ENCODE measurements at regions of chr22 and their contacts with region 1.

Region 1: GRCh38 chr22:22877523-22878210 is 9.9 kb upstream of the IGLL5 start:
- DNase-seq: peak; percentile 62
- ATAC-seq: no peak; the same call in 1 of the 2 replicates
- H3K4me3 ChIP-seq: no peak overlapping the region
- H3K27ac ChIP-seq: no peak overlapping the region
- H3K4me1 ChIP-seq: no peaks in the 10 kb centered on the region
- H3K27me3 ChIP-seq: no peaks in the 10 kb centered on the region; the same call in 1 of the 2 replicates
- CTCF ChIP-seq: peak; percentile 62

Region 2: GRCh38 chr22:22787786-22788459 is 89.7 kb before region 1 on chr22:
- CTCF ChIA-PET with region 1: interaction called, 5 read pairs
- POLR2A ChIA-PET with region 1: no interaction called
- intact Hi-C with region 1: loop called (anchors 5 kb)
- DNase-seq: peak; percentile 60
- ATAC-seq: peak; percentile 49
- H3K4me3 ChIP-seq: no peak overlapping the region
- H3K27ac ChIP-seq: no peak overlapping the region
- H3K4me1 ChIP-seq: no peaks in the 10 kb centered on the region
- H3K27me3 ChIP-seq: peaks cover 30% of the 10 kb centered on the region
- CTCF ChIP-seq: peak; percentile 80

Region 3: DNA sequence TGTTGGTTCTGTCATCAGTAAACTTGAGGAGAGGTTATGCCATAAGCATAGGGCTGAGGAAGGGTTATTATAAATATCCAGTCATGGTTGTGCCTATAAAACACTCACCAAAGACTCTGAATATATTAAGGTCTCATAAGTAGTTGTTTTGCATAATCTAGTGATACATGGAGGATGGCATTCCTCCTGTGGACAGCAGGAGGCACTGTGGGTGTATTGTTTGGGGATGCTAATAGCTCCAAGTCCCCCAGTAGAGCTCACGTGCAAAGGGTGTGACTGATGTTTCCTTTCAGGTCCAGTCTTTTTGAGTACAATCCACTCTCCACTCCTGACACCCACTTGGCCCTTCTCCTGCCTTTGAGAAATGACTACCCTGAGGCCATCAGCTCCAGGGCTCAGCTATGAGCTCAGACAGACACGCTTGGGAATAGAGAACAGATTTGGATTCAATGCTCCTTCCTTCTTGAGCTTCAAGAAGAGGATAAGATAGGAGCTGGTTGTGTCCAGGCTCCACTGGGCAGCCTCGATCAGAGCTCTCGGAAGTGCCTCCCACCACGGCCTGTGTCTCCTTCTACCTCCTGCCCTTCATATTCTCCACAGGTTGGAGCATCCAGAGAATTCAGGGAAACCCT is 75.2 kb before region 1 on chr22:
- CTCF ChIA-PET with region 1: no interaction called
- POLR2A ChIA-PET with region 1: no interaction called
- intact Hi-C with region 1: no loop called
- DNase-seq: no peak
- ATAC-seq: no peak
- H3K4me3 ChIP-seq: no peak overlapping the region
- H3K27ac ChIP-seq: no peak overlapping the region
- H3K4me1 ChIP-seq: no peaks in the 10 kb centered on the region
- H3K27me3 ChIP-seq: peaks cover 27% of the 10 kb centered on the region
- CTCF ChIP-seq: peak; percentile 39

Region 4: GRCh38 chr22:22848364-22848866 is 29.3 kb before region 1 on chr22:
- CTCF ChIA-PET with region 1: interaction called, 3 read pairs
- POLR2A ChIA-PET with region 1: no interaction called
- intact Hi-C with region 1: loop called (anchors 2 kb)
- DNase-seq: peak; percentile 77
- ATAC-seq: peak; percentile 95
- H3K4me3 ChIP-seq: no peak overlapping the region
- H3K27ac ChIP-seq: no peak overlapping the region
- H3K4me1 ChIP-seq: no peaks in the 10 kb centered on the region
- H3K27me3 ChIP-seq: peaks cover 19% of the 10 kb centered on the region; the same call in 1 of the 2 replicates
- CTCF ChIP-seq: peak; percentile 85

Region 5: DNA sequence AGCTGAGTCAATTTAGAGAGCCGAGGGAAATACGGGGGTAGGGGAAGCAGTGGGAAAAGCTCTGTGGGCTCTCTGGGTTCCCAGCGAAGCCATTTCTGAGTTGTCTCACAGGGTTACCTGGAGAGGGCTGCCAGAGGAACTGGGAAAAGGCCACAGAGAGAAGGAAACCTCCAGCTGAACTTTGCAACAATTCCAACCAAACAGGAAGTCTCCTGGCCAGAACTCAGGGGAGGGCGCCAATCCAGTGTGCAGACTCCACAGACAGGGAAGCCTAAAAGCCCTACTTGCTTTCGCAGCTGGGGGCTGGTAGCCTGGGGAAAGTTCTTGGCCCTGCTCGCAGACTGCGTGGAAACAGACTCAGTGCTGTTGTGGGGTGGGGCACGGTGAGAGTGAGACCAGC is 169.6 kb after region 1 on chr22:
- CTCF ChIA-PET with region 1: no interaction called
- POLR2A ChIA-PET with region 1: no interaction called
- intact Hi-C with region 1: no loop called
- DNase-seq: no peak
- ATAC-seq: no peak
- H3K4me3 ChIP-seq: no peak overlapping the region
- H3K27ac ChIP-seq: no peak overlapping the region
- H3K4me1 ChIP-seq: peaks cover 10% of the 10 kb centered on the region
- H3K27me3 ChIP-seq: no peaks in the 10 kb centered on the region
- CTCF ChIP-seq: no peak

Region 6: GRCh38 chr22:23106906-23107367 is 229.3 kb after region 1 on chr22:
- CTCF ChIA-PET with region 1: no interaction called
- POLR2A ChIA-PET with region 1: no interaction called
- intact Hi-C with region 1: no loop called
- DNase-seq: no peak
- ATAC-seq: no peak
- H3K4me3 ChIP-seq: no peak overlapping the region
- H3K27ac ChIP-seq: no peak overlapping the region
- H3K4me1 ChIP-seq: no peaks in the 10 kb centered on the region
- H3K27me3 ChIP-seq: no peaks in the 10 kb centered on the region
- CTCF ChIP-seq: no peak

Measured in PC-3 (cell line).